ENCODE measurements at regions of chr12 and their contacts with region 1.

Region 1: GRCh38 chr12:99810718-99811593 is 163.4 kb downstream of the GARIN6 start:
- DNase-seq: no peak
- ATAC-seq: no peak
- H3K4me3 ChIP-seq: no peak overlapping the region
- H3K4me3 Mint-ChIP-seq: no peak overlapping the region
- H3K27ac ChIP-seq: no peak overlapping the region
- H3K27ac Mint-ChIP-seq: no peak overlapping the region
- H3K4me1 ChIP-seq: no peaks in the 10 kb centered on the region
- H3K4me1 Mint-ChIP-seq: no peaks in the 10 kb centered on the region
- H3K27me3 ChIP-seq: no peaks in the 10 kb centered on the region
- H3K27me3 Mint-ChIP-seq: no peaks in the 10 kb centered on the region

Region 2: DNA sequence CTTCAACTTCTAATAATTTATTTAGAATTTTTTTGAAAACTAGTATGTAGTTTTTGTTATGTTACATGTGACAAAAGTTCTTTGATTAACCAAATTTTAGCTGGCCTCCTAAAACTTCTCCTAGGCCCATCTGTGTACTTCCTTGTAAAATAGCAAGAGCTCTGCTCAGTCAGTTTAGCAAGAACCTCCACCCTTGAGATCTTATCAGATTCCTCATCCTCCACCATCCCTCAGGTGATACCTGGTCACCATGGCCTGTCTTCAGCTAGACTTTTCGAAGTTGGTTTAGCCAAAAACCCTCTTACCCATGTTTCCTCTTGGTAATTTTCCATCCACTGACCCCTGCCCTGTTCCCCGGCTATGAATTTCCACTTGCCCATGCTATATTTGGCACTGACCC is 31.4 kb after region 1 on chr12:
- CTCF ChIA-PET with region 1: no interaction called
- POLR2A ChIA-PET with region 1: no interaction called
- intact Hi-C with region 1: no loop called
- DNase-seq: no peak
- ATAC-seq: no peak
- H3K4me3 ChIP-seq: no peak overlapping the region
- H3K4me3 Mint-ChIP-seq: no peak overlapping the region
- H3K27ac ChIP-seq: no peak overlapping the region
- H3K27ac Mint-ChIP-seq: no peak overlapping the region
- H3K4me1 ChIP-seq: no peaks in the 10 kb centered on the region
- H3K4me1 Mint-ChIP-seq: no peaks in the 10 kb centered on the region
- H3K27me3 ChIP-seq: no peaks in the 10 kb centered on the region
- H3K27me3 Mint-ChIP-seq: no peaks in the 10 kb centered on the region

Region 3: GRCh38 chr12:100554608-100555077 is 743.7 kb after region 1 on chr12:
- CTCF ChIA-PET with region 1: no interaction called
- POLR2A ChIA-PET with region 1: no interaction called
- intact Hi-C with region 1: loop called in 1 of 2 experiments (anchors 5 kb)
- DNase-seq: peak in 2 of 9 donors; percentile 4 to 13
- ATAC-seq: no peak
- H3K4me3 ChIP-seq: no peak overlapping the region
- H3K4me3 Mint-ChIP-seq: no peak overlapping the region
- H3K27ac ChIP-seq: no peak overlapping the region
- H3K27ac Mint-ChIP-seq: peak overlapping the region in 1 of 9 donors; percentile 25
- H3K4me1 ChIP-seq: no peaks in the 10 kb centered on the region
- H3K4me1 Mint-ChIP-seq: no peaks in the 10 kb centered on the region
- H3K27me3 ChIP-seq: no peaks in the 10 kb centered on the region
- H3K27me3 Mint-ChIP-seq: peaks cover 0 to 16% (median 7%) of the 10 kb centered on the region in 5 donors

Measured in naive thymus-derived CD4-positive, alpha-beta T cell (primary cell).